Right ventricle myocardium inferior (tissue), 1 donor: ENCODE measurements at regions of chr14 and their contacts with region 1.

Region 1: DNA sequence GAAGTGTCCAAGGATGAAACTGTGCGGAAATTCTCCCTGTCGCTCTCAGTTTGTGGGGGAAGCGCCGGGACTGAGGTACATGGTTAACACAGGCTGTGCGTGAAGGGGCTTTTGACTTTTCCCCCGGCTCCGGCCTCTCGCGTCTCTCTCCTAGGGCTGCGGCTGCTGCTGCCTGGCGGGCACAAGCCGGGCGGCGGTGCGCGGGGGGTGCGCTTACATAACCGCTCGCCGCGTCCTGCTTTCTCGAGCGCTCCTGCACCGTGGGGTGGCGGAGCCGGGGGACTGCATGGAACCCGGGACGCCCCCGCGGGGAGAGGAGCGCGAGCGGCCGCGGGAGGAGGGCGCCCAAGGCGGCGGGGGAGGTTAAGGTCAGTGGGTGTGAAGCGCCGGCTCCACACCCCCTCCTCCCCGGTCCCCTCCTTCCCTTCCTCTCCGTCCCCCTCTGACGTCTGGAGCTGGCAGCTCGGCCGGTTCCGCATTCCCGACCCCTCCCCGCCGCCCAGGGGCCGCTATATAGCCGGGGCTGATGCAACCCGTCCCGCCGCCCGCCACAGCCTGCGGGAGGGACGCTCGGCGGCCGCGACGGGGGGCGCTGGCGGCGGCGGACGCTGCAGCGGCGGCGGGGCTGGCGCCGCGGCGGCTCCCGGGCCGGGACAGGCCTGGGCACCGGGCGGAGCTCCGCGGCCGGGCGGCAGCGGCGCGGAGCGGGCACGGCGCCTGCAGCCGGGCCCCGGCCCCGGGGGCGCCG is at the start of gene JDP2:
- DNase-seq: peak; percentile 98
- ATAC-seq: peak; percentile 93
- total RNA-seq, gene JDP2: 27.2 TPM

Region 2: GRCh38 chr14:75176142-75176820 is 251.4 kb before region 1 on chr14 and contains the start of gene TMED10:
- intact Hi-C with region 1: no loop called
- DNase-seq: peak; percentile 93
- ATAC-seq: peak; percentile 95
- total RNA-seq, gene TMED10: 280 TPM

Region 3: GRCh38 chr14:75399821-75400678 is 27.6 kb before region 1 on chr14:
- intact Hi-C with region 1: loop called (anchors 1 kb)
- DNase-seq: peak; percentile 92
- ATAC-seq: peak; percentile 88

Region 4: DNA sequence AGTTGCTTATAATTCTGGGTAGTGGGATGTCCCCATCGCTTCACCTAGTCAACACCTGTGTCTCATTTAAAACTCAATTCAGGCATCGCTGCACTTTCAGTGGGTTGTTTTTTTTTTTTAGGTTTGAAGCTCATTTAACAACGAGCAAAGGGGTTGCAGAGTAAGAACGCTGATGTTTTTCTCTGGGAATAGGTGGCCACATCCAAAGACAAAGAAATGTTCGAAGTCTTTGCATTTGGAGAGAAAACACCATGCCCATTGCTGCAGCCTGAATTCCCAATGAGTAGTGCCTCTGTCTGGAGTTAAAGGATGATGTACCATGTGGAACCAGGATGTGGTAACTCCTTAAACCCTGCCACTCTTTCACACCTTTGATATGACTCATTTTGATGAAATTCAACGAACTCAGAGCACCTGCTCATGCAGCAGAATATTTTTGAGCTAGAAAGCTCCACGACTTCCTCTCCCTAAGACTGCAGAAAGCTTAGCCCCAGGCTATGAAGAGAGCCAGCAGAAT is 59.6 kb after region 1 on chr14:
- intact Hi-C with region 1: loop called (anchors 5 kb)
- DNase-seq: no peak
- ATAC-seq: no peak